Aorta (tissue), 5 donors: ENCODE measurements at regions of chr11 and their contacts with region 1.

Region 1: GRCh38 chr11:95231127-95231880 is at the start of gene SESN3:
- DNase-seq: peak; percentile 100
- ATAC-seq: peak; percentile 98
- H3K4me3 ChIP-seq: peak within 1 kb of the TSS; percentile 66 to 86
- H3K27ac ChIP-seq: peak within 1 kb of the TSS; percentile 90 to 91
- H3K4me1 ChIP-seq: peaks cover 0 to 7% of the 10 kb centered on the region in 2 donors
- H3K27me3 ChIP-seq: no peaks in the 10 kb centered on the region
- total RNA-seq, gene SESN3: 34.9 to 64.5 TPM

Region 2: GRCh38 chr11:95163106-95163505 is 68.2 kb before region 1 on chr11:
- intact Hi-C with region 1: loop called in 1 of 2 experiments (anchors 10 kb)
- DNase-seq: no peak
- ATAC-seq: no peak
- H3K4me3 ChIP-seq: no peak overlapping the region
- H3K27ac ChIP-seq: no peak overlapping the region
- H3K4me1 ChIP-seq: peaks cover 0 to 1% of the 10 kb centered on the region in 2 donors
- H3K27me3 ChIP-seq: no peaks in the 10 kb centered on the region

Region 3: GRCh38 chr11:95266751-95267374 is 35.6 kb after region 1 on chr11:
- intact Hi-C with region 1: no loop called
- DNase-seq: no peak
- ATAC-seq: peak; percentile 81
- H3K4me3 ChIP-seq: no peak overlapping the region
- H3K27ac ChIP-seq: no peak overlapping the region
- H3K4me1 ChIP-seq: no peaks in the 10 kb centered on the region
- H3K27me3 ChIP-seq: no peaks in the 10 kb centered on the region

Region 4: GRCh38 chr11:95337175-95337957 is 106.1 kb after region 1 on chr11:
- intact Hi-C with region 1: loop called in 1 of 2 experiments (anchors 10 kb)
- DNase-seq: peak; percentile 81 to 84
- ATAC-seq: peak; percentile 66
- H3K4me3 ChIP-seq: no peak overlapping the region
- H3K27ac ChIP-seq: peak overlapping the region; percentile 83 to 96
- H3K4me1 ChIP-seq: peaks cover 5 to 8% of the 10 kb centered on the region in 2 donors
- H3K27me3 ChIP-seq: no peaks in the 10 kb centered on the region

Region 5: DNA sequence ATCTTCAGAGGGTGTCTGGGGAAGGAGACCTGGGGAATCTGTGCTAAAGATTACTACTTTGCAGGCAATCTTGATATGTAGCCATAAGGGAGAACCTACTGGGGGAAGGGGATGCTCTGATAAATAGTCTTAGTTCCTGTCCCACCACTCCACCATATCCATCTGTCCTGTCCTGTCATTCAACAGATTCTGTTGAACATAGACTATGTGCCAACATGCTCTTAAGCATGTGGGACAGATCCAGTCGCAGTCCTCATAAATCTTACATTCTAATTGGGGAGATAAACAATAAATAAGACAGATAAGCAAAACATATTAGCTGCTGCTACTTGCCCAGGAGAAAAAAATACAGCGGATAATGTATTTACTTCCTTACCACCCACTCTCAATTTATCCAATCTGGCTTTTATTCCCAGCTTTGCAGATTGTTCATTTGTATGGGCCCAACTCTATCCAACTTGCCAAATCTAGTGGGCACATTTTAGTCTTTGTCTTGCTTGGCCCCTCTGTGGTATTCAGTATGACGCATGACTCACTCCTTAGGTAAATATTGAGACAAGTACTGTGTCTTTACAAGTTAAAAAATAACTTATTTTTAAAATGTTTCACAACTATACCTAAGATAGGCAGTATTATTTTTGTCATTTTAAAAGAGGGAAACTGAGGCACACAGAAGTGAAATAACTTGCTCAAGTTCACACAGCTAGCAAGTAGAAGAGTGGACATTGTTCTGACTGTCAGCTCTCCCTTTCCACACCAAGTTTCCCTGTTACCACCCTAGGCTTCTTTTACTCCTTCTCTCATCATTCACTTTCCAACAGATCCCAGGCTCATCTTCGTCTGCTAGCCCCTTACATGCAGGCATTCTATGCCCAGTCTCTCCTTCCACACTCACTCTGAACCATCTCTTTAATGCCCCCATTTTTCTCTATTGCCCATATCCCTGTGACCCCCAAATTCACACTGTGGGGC is 133.3 kb after region 1 on chr11:
- intact Hi-C with region 1: loop called in 1 of 2 experiments (anchors 10 kb)
- DNase-seq: no peak
- ATAC-seq: no peak
- H3K4me3 ChIP-seq: no peak overlapping the region
- H3K27ac ChIP-seq: peak overlapping the region in 1 of 2 donors; percentile 64
- H3K4me1 ChIP-seq: peaks cover 3 to 11% of the 10 kb centered on the region in 2 donors
- H3K27me3 ChIP-seq: no peaks in the 10 kb centered on the region

Region 6: GRCh38 chr11:95567685-95568084 is 336.4 kb after region 1 on chr11:
- intact Hi-C with region 1: loop called in 1 of 2 experiments (anchors 2 kb)
- DNase-seq: no peak
- ATAC-seq: peak; percentile 57
- H3K4me3 ChIP-seq: no peak overlapping the region
- H3K27ac ChIP-seq: peak overlapping the region in 1 of 2 donors; percentile 77
- H3K4me1 ChIP-seq: peaks cover 11 to 12% of the 10 kb centered on the region in 2 donors
- H3K27me3 ChIP-seq: no peaks in the 10 kb centered on the region

Region 7: DNA sequence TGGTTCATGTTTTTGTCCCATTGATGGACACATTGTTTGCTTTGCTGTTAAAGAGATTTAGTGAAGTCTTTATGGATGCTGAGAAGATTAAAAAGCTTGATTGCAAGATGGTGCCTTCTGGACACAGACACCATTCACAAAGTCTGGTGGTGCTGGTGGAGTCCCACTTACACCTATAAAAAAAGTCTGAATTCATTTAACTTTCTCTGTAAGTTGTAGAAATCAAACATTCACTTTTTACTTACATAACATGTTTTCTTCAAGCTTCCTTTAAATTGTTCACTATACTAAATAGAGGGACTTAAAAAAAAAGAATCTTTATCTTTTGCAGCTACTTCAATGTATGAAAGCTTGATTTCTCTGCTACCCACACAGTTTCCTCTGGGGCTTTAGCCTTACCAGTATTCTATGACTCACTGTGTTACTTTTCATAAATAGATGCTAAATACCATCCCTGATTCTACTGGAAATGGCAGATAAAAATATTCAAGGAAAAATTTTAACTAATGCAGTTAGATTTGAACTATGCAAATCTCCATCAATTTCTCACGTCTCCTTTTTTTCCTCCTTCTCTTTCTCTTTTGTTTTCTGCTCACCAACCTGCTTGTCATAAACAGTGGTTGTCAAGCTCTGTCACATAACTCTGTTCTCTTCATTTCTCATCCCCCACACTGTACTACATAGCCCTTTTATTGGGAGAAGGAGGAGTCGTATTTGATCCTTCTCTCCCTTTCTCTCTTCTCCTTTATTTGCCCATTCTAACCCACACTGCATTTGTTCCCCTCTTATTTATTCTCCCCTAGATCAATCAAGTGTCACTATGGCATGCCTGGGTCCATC is 468.5 kb after region 1 on chr11:
- intact Hi-C with region 1: loop called in 1 of 2 experiments (anchors 2 kb)
- DNase-seq: no peak
- ATAC-seq: no peak
- H3K4me3 ChIP-seq: no peak overlapping the region
- H3K27ac ChIP-seq: no peak overlapping the region
- H3K4me1 ChIP-seq: no peaks in the 10 kb centered on the region
- H3K27me3 ChIP-seq: no peaks in the 10 kb centered on the region